ENCODE measurements at regions of chr17 and their contacts with region 1.

Region 1: DNA sequence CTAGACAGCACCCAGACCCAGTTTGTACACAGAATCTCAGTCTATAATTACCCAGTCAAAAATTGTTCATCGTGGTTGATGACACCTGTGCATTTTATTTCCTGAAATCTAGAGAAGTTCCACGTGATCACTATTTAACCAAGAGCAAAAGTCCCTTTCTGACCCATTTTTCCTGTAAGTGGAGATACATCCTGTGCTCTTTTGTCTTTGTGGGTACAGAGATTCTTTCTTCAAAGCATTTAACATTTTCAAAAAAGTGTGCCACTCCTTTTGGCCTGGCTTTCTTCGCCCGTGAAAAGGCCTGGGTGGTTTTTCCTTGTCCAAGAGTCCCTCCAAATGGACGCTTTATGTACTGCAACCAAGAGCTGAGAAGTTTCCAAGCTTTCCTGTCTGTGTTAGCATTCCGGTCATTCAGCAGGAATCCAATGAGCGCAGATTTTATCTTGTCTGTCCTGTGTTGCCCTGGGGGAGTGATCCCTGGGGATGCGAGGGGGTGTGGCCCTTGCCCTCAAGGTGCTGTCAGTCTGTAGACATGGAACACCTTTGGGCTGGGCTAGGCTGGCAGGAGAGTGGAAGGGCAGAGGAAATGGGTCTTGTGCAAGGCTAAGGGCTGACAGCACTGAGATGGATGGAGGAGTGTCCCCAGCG is 161.1 kb upstream of the CACNG5 start:
- DNase-seq: peak; percentile 68
- H3K4me3 ChIP-seq: no peak overlapping the region
- H3K27ac ChIP-seq: no peak overlapping the region
- H3K4me1 ChIP-seq: peaks cover 2% of the 10 kb centered on the region
- H3K27me3 ChIP-seq: no peaks in the 10 kb centered on the region
- CTCF ChIP-seq: peak; percentile 64 to 74
- POLR2A ChIP-seq: no peak

Region 2: GRCh38 chr17:66165513-66166123 is 508.2 kb before region 1 on chr17:
- CTCF ChIA-PET with region 1: interaction called, 22 read pairs
- POLR2A ChIA-PET with region 1: no interaction called
- dilution Hi-C with region 1: no loop called
- intact Hi-C with region 1: no loop called
- DNase-seq: peak; percentile 72
- H3K4me3 ChIP-seq: no peak overlapping the region
- H3K27ac ChIP-seq: no peak overlapping the region
- H3K4me1 ChIP-seq: no peaks in the 10 kb centered on the region
- H3K27me3 ChIP-seq: no peaks in the 10 kb centered on the region
- CTCF ChIP-seq: peak; percentile 33 to 45
- POLR2A ChIP-seq: no peak

Region 3: GRCh38 chr17:66207936-66208335 is 465.9 kb before region 1 on chr17:
- CTCF ChIA-PET with region 1: interaction called, 55 read pairs
- POLR2A ChIA-PET with region 1: no interaction called
- dilution Hi-C with region 1: no loop called
- intact Hi-C with region 1: no loop called
- DNase-seq: no peak
- H3K4me3 ChIP-seq: no peak overlapping the region
- H3K27ac ChIP-seq: no peak overlapping the region
- H3K4me1 ChIP-seq: no peaks in the 10 kb centered on the region
- H3K27me3 ChIP-seq: no peaks in the 10 kb centered on the region
- CTCF ChIP-seq: no peak
- POLR2A ChIP-seq: no peak

Region 4: GRCh38 chr17:66275651-66276050 is 398.1 kb before region 1 on chr17:
- CTCF ChIA-PET with region 1: interaction called, 11 read pairs
- POLR2A ChIA-PET with region 1: no interaction called
- dilution Hi-C with region 1: no loop called
- intact Hi-C with region 1: no loop called
- DNase-seq: peak; percentile 90
- H3K4me3 ChIP-seq: no peak overlapping the region
- H3K27ac ChIP-seq: peak overlapping the region; percentile 87
- H3K4me1 ChIP-seq: peaks cover 30% of the 10 kb centered on the region
- H3K27me3 ChIP-seq: no peaks in the 10 kb centered on the region
- CTCF ChIP-seq: no peak
- POLR2A ChIP-seq: no peak

Region 5: GRCh38 chr17:66580184-66580955 is 93.4 kb before region 1 on chr17:
- CTCF ChIA-PET with region 1: interaction called, 9 read pairs
- POLR2A ChIA-PET with region 1: no interaction called
- dilution Hi-C with region 1: no loop called
- intact Hi-C with region 1: loop called (anchors 5 kb)
- DNase-seq: peak; percentile 66
- H3K4me3 ChIP-seq: no peak overlapping the region
- H3K27ac ChIP-seq: peak overlapping the region; percentile 72
- H3K4me1 ChIP-seq: peaks cover 30% of the 10 kb centered on the region
- H3K27me3 ChIP-seq: no peaks in the 10 kb centered on the region
- CTCF ChIP-seq: no peak
- POLR2A ChIP-seq: no peak

Region 6: GRCh38 chr17:66698270-66698669 is 24.5 kb after region 1 on chr17:
- CTCF ChIA-PET with region 1: no interaction called
- POLR2A ChIA-PET with region 1: no interaction called
- dilution Hi-C with region 1: no loop called
- intact Hi-C with region 1: no loop called
- DNase-seq: no peak
- H3K4me3 ChIP-seq: no peak overlapping the region
- H3K27ac ChIP-seq: no peak overlapping the region
- H3K4me1 ChIP-seq: no peaks in the 10 kb centered on the region
- H3K27me3 ChIP-seq: no peaks in the 10 kb centered on the region
- CTCF ChIP-seq: no peak
- POLR2A ChIP-seq: no peak

Region 7: DNA sequence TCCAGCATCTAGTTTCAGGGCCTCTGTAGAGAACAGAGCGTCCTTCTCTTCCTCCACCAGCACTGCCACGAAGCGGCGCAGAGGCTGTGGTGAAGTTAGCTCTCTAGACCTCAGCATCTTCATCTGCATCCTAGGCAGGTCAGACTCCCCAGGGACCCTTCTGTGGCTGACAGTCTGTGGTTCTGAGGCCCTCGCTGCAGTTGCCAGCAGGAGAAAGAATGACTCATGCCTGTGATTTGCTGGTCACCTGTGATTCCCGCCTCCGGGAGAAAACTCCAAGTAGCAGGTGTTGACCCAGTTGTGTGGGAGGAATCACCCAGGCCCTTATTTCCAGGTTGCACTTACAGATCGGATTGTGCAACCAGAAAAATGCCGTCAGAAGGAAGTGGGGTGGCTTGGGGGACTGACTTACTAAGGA is 43.9 kb after region 1 on chr17:
- CTCF ChIA-PET with region 1: no interaction called
- POLR2A ChIA-PET with region 1: no interaction called
- dilution Hi-C with region 1: no loop called
- intact Hi-C with region 1: no loop called
- DNase-seq: no peak
- H3K4me3 ChIP-seq: no peak overlapping the region
- H3K27ac ChIP-seq: no peak overlapping the region
- H3K4me1 ChIP-seq: no peaks in the 10 kb centered on the region
- H3K27me3 ChIP-seq: no peaks in the 10 kb centered on the region
- CTCF ChIP-seq: no peak
- POLR2A ChIP-seq: no peak

Region 8: DNA sequence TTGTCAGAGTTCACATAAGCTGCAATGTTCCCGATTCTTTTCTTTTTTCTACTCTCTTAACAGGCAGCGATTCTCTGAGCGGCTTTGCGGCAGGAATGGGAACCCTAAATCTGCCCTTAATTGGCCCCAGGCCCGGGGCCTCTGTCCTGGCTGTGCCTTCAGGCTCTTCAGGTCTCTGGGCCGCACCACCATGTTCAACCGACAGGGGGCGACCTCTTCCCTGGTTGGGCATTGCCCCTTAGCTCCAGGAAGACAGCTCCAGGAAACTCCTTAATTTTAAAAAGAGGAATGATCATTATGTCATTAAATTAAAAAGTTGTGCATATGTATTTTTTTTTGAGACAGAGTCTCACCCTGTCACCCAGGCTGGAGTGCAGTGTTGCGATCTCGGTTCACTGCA is 181.4 kb after region 1 on chr17:
- CTCF ChIA-PET with region 1: no interaction called
- POLR2A ChIA-PET with region 1: no interaction called
- dilution Hi-C with region 1: no loop called
- intact Hi-C with region 1: no loop called
- DNase-seq: no peak
- H3K4me3 ChIP-seq: no peak overlapping the region
- H3K27ac ChIP-seq: no peak overlapping the region
- H3K4me1 ChIP-seq: no peaks in the 10 kb centered on the region
- H3K27me3 ChIP-seq: peaks cover 0 to 10% of the 10 kb centered on the region in 2 experiments
- CTCF ChIP-seq: peak; percentile 26 to 31
- POLR2A ChIP-seq: no peak

Measured in endothelial cell of umbilical vein (primary cell).